ENCODE measurements at regions of chr14 and their contacts with region 1.

Region 1: DNA sequence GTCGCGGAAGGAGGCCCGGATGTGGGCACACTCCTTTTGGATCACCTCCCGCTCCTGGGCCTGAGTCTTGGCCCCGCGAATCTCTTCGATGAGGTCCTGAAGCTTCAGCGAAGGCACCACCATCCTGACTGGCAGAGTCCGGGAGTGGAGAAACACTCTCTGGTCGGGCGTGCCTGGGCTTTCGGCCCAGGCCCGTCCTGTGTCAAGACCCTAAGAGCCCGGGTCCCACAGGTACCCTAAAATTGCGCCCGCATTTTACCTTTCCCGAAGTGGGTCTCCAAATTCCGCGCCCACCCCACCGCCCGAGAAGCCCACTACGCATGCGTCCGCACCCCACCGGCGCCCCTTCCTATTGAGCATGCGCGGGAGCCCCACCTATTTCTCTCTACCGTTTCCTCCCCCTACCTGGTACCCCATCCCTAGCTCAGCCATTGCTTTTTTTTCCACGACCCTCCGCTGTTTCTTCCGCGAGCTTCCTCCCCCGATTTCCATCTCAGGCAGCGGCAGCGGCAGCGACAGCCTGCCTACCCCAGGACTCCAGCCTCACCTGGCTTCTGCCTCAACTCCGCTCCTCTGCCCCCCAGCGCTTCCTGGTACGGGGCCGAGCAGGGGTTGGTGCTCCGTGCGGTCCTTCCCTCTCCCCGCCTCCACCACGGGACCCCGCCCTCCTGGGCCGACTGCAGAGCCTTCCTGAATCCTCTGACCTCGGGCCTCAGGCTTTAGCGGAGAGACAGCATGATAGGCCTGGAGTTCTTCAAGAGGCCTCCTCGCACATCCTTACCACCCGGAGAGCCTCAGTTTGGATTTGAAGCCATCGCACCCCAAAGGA is at the start of gene AP1G2:
- DNase-seq: peak; percentile 90 to 93 (median 92)
- ATAC-seq: peak; percentile 88
- H3K4me3 ChIP-seq: peak within 1 kb of the TSS in 1 of 2 donors; percentile 47
- H3K27ac ChIP-seq: peak within 1 kb of the TSS; percentile 62 to 85 (median 74)
- H3K4me1 ChIP-seq: peaks cover 30% of the 10 kb centered on the region
- H3K27me3 ChIP-seq: no peaks in the 10 kb centered on the region
- CTCF ChIP-seq: no peak
- POLR2A ChIP-seq: peak; percentile 48 to 92 (median 87)
- total RNA-seq, gene AP1G2: 150 to 237 TPM

Region 2: DNA sequence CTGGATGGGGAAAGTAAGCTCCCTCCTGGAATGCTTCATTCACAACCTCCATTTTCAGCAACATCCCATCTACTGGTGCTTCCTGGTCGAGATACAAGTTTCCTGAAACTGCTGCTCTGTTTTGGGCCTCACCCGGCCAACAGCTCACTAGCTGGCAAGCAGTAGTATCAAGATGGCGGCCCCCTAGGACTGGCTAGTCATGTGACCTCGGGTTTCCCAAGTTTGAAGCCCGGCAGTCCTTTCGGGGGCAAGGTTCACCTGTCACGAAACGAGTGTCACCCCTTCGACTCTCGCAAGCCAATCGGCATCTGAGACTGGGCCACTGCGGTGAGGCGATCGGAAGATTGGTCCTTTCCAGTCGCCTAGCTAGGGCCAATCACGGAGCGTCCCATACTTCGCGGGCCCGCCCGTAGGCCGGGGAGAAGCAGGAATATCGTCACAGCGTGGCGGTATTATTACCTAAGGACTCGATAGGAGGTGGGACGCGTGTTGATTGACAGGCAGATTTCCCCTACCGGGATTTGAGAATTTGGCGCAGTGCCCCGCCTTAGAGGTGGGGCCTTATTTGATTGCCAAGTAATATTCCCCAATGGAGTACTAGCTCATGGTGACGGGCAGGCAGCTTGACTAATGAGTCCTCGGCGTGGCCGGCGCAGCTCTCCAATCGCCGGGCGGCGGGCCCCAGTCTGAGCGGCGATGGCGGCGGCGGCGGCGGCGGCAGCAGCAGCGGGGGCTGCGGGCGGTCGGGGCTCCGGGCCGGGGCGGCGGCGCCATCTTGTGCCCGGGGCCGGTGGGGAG is 246.4 kb before region 1 on chr14 and contains the start of gene PABPN1:
- intact Hi-C with region 1: loop called (anchors 10 kb)
- DNase-seq: peak; percentile 99 to 100 (median 99)
- ATAC-seq: peak; percentile 92
- H3K4me3 ChIP-seq: peak within 1 kb of the TSS; percentile 68 to 76
- H3K27ac ChIP-seq: peak within 1 kb of the TSS; percentile 92 to 99 (median 96)
- H3K4me1 ChIP-seq: peaks cover 30% of the 10 kb centered on the region
- H3K27me3 ChIP-seq: no peaks in the 10 kb centered on the region
- CTCF ChIP-seq: peak in 1 of 7 experiments; percentile 5
- POLR2A ChIP-seq: peak; percentile 35 to 64 (median 58)
- total RNA-seq, gene PABPN1: 28.8 to 46.8 TPM

Region 3: GRCh38 chr14:23344442-23344841 is 223.0 kb before region 1 on chr14:
- intact Hi-C with region 1: no loop called
- DNase-seq: no peak
- ATAC-seq: no peak
- H3K4me3 ChIP-seq: no peak overlapping the region
- H3K27ac ChIP-seq: no peak overlapping the region
- H3K4me1 ChIP-seq: no peaks in the 10 kb centered on the region
- H3K27me3 ChIP-seq: no peaks in the 10 kb centered on the region
- CTCF ChIP-seq: no peak
- POLR2A ChIP-seq: no peak

Region 4: DNA sequence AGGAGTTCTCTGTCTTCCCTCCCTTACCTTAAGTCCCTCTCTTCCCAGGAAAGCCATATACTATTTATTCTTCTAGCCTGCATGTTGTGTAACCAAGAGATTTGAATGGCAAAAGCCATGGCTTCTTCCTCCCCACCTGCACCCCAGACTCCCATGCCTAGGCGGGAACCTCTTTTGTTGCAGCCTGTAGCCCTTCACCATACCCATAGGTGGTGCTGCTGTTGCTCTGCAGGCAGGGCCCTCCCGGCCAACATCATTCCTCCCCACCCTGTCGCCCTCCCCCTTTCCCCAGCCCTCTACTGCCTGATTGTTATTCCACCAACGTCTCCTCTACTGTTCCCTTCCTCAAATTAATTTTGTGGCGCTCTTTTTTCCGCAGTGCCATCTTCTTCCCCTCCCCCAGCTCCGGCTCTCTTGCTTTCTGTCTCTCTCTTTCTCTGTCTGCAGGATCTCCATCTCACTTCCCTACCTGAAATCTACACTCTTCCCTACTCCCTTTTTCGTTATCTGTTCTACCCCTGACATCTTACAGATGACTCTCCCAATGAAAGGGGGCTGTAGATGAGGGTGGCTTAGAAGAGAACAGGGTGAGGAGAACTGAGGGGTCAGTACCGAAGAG is 84.1 kb before region 1 on chr14:
- intact Hi-C with region 1: loop called (anchors 5 kb)
- DNase-seq: no peak
- ATAC-seq: no peak
- H3K4me3 ChIP-seq: no peak overlapping the region
- H3K27ac ChIP-seq: no peak overlapping the region
- H3K4me1 ChIP-seq: no peaks in the 10 kb centered on the region
- H3K27me3 ChIP-seq: no peaks in the 10 kb centered on the region
- CTCF ChIP-seq: peak in 1 of 7 experiments; percentile 7
- POLR2A ChIP-seq: no peak

Measured in body of pancreas (tissue), 4 donors.